MCF 10A (cell line): ENCODE measurements at regions of chr11 and their contacts with region 1.

Region 1: DNA sequence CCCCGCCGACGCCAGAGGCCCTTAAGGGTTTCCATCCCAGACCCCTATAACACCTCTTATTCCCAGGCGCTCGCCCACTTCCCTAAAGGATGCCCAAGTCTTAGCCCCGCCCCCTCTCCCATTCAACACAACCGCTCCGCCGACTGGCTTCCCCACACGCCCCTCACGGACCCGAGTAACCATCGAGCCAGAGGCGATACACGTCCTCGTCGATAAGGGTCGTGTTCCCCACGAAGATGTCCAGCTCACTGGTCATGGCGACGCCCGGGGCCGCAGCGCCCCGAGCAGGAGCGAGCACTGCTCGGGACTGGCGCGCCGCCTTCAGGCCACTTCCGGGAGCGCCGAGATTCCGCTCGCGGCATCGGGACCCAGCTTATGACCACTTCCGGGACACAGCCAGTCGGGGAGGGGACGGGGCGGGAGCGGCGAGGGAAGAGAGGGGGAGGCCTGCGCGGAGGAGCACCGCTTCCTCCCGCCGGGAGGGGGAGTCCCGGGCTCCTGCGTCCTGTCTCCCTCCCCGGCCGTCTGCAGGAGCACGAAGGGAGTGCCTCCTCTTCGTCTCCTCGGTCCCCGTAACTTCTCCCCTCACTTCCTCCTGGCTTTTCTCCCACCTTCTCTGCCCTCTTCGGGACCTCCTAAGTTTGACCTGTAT is at the start of gene FIBP:
- DNase-seq: peak; percentile 97
- H3K4me3 Mint-ChIP-seq: peak within 1 kb of the TSS; percentile 90
- H3K27ac Mint-ChIP-seq: peak within 1 kb of the TSS; percentile 90
- H3K4me1 Mint-ChIP-seq: peaks cover 28% of the 10 kb centered on the region
- H3K27me3 Mint-ChIP-seq: no peaks in the 10 kb centered on the region
- CTCF ChIP-seq: peak; percentile 84
- total RNA-seq, gene FIBP: 79.8 and 80.8 TPM in 2 replicates

Region 2: DNA sequence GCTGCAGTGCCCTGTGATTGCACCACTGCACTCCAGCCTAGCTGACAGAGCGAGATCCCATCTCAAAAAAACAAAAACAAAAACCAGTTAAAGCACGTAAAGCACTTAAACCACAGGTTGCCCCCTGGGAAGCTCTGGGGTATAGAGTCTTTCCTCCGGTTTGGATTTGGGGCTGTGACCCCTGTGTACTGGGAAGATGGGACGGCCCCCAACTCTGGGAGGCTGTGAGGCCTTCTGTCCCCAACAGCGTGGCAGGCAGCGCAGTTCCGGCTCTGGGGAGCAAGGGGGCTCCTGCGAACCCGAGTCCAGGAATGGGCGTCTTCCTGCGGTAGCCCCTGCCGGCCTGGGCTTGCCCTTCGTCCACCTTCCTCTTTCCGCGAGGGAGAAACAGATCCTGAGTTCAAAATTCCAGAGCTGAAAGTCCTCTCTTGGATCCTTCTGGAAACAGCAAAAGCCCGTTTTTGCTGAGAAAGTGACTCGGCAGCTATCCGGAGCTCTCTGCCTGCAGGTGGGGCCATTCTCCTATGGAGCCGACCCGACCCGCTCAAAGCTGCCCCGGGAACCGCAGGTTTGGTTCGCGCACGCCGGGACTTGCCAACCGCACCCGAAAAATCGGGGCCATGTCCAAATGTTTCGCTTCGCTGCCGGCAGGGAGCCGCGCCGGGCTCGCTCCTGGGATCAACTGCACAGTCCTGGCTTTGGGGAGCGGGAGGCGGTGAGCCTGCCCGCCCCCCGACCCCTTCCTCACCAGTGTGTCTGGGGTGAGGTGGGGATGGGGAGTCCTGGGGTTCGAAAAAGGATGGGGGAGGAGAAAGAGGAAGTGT is 662.8 kb before region 1 on chr11:
- CTCF ChIA-PET with region 1: no interaction called
- POLR2A ChIA-PET with region 1: no interaction called
- intact Hi-C with region 1: no loop called
- DNase-seq: peak; percentile 72
- H3K4me3 Mint-ChIP-seq: peak overlapping the region; percentile 71
- H3K27ac Mint-ChIP-seq: peak overlapping the region; percentile 35
- H3K4me1 Mint-ChIP-seq: peaks cover 5% of the 10 kb centered on the region
- H3K27me3 Mint-ChIP-seq: no peaks in the 10 kb centered on the region
- CTCF ChIP-seq: peak; percentile 36

Region 3: GRCh38 chr11:65615229-65615941 is 272.9 kb before region 1 on chr11 and contains the start of gene PCNX3:
- CTCF ChIA-PET with region 1: interaction called, 3 read pairs
- POLR2A ChIA-PET with region 1: interaction called, 10 read pairs
- intact Hi-C with region 1: no loop called
- DNase-seq: peak; percentile 100
- H3K4me3 Mint-ChIP-seq: peak within 1 kb of the TSS; percentile 91
- H3K27ac Mint-ChIP-seq: peak within 1 kb of the TSS; percentile 96
- H3K4me1 Mint-ChIP-seq: peaks cover 26% of the 10 kb centered on the region
- H3K27me3 Mint-ChIP-seq: no peaks in the 10 kb centered on the region
- CTCF ChIP-seq: no peak
- total RNA-seq, gene PCNX3: 40.9 and 45.8 TPM in 2 replicates

Region 4: DNA sequence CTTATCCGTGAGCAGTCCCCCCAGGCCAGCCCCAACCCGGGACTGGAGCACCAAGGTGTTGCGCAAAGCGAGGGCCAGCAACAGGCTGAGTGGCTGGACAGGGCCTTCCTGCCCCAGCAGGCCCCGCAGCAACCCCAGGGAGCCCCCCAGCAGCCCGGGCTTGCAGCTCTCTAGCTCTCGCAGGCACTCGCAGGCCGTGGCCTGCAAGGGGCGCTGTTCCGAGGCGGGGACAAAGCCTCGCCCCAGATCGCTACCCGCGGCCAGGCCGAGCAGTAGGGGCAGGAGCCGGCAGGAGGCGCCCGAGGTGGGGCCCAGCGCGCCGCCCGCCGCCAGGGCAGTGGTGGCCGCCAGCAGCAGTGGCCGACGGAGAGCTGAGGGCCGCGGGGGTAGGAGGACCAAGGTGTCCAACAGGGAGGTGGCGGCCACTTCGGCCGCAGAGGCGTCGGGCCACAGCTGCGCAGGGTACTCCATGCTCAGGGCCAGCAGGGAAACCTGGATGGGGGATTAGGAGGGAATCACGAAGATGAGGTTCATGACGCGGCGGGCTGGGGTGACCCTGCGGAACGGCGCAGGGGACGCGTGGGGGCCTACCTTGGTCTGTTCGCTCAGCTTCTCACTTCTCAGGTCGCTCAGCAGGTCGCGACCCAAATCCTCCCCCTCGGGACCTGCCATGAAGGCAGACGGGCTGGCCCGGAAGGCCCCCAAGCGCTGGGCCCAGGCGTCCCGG is 108.3 kb before region 1 on chr11:
- CTCF ChIA-PET with region 1: interaction called, 13 read pairs
- POLR2A ChIA-PET with region 1: interaction called, 4 read pairs
- intact Hi-C with region 1: no loop called
- DNase-seq: peak; percentile 78
- H3K4me3 Mint-ChIP-seq: peak overlapping the region; percentile 96
- H3K27ac Mint-ChIP-seq: peak overlapping the region; percentile 93
- H3K4me1 Mint-ChIP-seq: no peaks in the 10 kb centered on the region
- H3K27me3 Mint-ChIP-seq: no peaks in the 10 kb centered on the region
- CTCF ChIP-seq: peak; percentile 99

Region 5: GRCh38 chr11:65802841-65803240 is 85.4 kb before region 1 on chr11:
- CTCF ChIA-PET with region 1: no interaction called
- POLR2A ChIA-PET with region 1: no interaction called
- intact Hi-C with region 1: no loop called
- DNase-seq: no peak
- H3K4me3 Mint-ChIP-seq: no peak overlapping the region
- H3K27ac Mint-ChIP-seq: no peak overlapping the region
- H3K4me1 Mint-ChIP-seq: no peaks in the 10 kb centered on the region
- H3K27me3 Mint-ChIP-seq: no peaks in the 10 kb centered on the region
- CTCF ChIP-seq: no peak

Region 6: GRCh38 chr11:65873318-65874156 is 14.8 kb before region 1 on chr11:
- CTCF ChIA-PET with region 1: interaction called, 20 read pairs
- POLR2A ChIA-PET with region 1: interaction called, 26 read pairs
- intact Hi-C with region 1: no loop called
- DNase-seq: peak; percentile 92
- H3K4me3 Mint-ChIP-seq: peak overlapping the region; percentile 78
- H3K27ac Mint-ChIP-seq: peak overlapping the region; percentile 87
- H3K4me1 Mint-ChIP-seq: peaks cover 7% of the 10 kb centered on the region
- H3K27me3 Mint-ChIP-seq: no peaks in the 10 kb centered on the region
- CTCF ChIP-seq: no peak

Region 7: DNA sequence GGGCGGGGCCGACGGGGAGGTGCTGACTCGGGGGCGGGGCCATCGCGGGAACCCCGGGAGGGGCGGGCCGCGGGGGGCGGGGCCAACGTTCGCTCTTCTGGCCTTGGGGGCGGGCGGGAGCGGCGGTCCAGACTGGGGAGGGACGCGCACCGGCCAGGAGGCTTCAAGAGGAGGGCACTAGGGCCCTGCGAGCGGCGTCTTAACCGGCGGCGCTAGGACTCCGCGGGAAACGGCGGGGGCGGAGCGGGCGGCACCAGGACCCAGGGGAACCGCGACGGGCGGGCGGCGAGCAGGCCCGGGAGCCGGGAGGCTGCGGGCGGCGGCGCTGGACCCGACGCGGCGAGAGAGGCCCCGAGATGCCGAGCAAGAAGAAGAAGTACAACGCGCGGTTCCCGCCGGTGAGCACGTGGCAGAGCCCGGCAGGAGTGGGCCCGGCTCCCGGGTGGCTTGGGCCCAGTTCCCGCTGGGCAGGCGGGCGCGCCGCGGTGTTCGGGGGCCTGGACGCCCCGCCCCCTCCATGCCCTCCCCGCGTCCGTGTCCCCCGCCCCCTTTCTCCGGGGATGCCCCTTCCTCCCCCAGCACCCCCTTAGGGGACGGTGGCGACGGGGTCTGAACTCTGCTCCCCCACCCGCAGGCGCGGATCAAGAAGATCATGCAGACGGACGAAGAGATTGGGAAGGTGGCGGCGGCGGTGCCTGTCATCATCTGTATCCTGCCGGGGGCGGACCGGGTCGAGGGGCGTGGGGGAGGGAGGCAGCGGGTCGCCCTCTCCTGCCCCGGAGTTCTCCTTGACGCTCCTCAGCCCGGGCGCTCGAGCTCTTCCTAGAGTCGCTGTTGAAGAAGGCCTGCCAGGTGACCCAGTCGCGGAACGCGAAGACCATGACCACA is 31.1 kb after region 1 on chr11 and contains the start of gene DRAP1:
- CTCF ChIA-PET with region 1: interaction called, 15 read pairs
- POLR2A ChIA-PET with region 1: interaction called, 96 read pairs
- intact Hi-C with region 1: no loop called
- DNase-seq: peak; percentile 97
- H3K4me3 Mint-ChIP-seq: peak within 1 kb of the TSS; percentile 89
- H3K27ac Mint-ChIP-seq: peak within 1 kb of the TSS; percentile 81
- H3K4me1 Mint-ChIP-seq: peaks cover 36% of the 10 kb centered on the region
- H3K27me3 Mint-ChIP-seq: no peaks in the 10 kb centered on the region
- CTCF ChIP-seq: no peak
- total RNA-seq, gene DRAP1: 162 and 167 TPM in 2 replicates

Region 8: DNA sequence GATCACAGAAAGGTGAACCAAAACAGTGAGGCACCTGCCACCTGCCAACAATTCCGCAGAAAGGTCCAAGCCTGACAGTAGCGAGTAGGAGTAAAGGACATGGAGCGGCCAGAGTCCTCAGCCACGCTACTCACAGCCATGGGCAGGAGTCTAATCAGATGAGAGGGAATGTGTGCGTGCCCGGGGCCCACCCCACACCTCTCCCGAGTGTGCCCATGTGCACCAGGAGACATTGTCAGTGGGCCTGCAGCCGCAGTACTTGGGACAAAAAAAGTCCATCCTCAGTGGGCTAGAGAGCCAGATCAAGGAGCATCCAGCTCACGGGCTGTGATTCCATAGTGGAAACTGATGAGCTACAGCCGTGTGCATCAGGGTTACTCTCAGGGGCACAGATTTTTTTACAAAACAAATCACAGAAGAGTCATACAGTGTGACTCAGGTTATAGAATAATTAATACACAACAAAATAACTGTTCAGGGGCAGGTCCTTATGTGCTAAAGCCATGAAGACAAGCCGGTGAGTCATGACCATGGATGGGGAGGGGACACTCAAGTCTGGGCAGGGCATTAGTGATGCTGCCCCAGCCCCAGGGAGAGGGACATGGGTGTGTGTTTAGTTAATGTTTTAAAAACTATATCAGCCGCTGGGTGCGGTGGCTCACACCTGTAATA is 85.3 kb after region 1 on chr11:
- CTCF ChIA-PET with region 1: interaction called, 27 read pairs
- POLR2A ChIA-PET with region 1: interaction called, 13 read pairs
- intact Hi-C with region 1: no loop called
- DNase-seq: peak; percentile 50
- H3K4me3 Mint-ChIP-seq: no peak overlapping the region
- H3K27ac Mint-ChIP-seq: peak overlapping the region; percentile 35
- H3K4me1 Mint-ChIP-seq: peaks cover 18% of the 10 kb centered on the region
- H3K27me3 Mint-ChIP-seq: no peaks in the 10 kb centered on the region
- CTCF ChIP-seq: no peak

Region 9: DNA sequence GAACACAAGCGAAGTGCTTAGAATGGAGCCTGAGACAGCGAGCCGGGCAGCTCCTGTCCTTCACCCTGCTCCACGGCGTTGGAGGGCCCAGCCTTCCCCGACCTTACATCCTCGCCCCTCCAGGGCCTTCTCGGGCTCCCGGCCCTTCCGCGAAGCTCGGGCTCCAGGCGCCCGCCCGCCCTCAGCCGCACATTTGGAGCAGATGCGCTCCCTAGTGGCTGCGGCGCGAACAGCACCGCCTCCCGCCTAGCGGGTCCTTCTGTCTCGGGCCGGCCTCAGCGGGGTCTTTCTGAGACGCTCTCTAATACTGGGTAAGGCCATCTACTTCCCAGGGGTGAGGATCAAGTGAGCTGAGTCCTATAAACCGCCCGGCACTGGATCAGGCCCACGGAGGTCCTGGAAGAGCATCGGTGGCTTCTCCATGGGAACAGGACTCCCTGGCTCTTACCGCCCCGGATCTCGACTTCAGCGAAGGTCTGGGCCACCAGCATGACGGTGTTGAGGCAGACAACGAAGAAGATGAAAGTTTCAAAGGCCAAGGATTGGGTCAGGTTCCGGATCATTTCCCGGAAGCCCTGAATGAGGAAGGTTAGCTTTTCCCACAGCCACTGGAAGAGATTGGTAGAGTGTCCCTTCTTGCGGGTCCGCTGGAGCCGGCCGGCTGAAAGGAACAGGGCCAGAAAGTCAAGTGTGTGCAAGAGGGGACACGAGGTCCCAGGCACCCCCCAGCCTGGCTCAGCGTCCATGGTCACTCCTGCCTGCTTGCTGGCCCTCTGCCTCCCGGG is 134.3 kb after region 1 on chr11:
- CTCF ChIA-PET with region 1: interaction called, 16 read pairs
- POLR2A ChIA-PET with region 1: no interaction called
- intact Hi-C with region 1: no loop called
- DNase-seq: peak; percentile 58
- H3K4me3 Mint-ChIP-seq: peak overlapping the region; percentile 21
- H3K27ac Mint-ChIP-seq: no peak overlapping the region
- H3K4me1 Mint-ChIP-seq: peaks cover 6% of the 10 kb centered on the region
- H3K27me3 Mint-ChIP-seq: no peaks in the 10 kb centered on the region
- CTCF ChIP-seq: peak; percentile 94